Cardiac septum (tissue), 1 donor: ENCODE measurements at regions of chr1 and their contacts with region 1.

Region 1: DNA sequence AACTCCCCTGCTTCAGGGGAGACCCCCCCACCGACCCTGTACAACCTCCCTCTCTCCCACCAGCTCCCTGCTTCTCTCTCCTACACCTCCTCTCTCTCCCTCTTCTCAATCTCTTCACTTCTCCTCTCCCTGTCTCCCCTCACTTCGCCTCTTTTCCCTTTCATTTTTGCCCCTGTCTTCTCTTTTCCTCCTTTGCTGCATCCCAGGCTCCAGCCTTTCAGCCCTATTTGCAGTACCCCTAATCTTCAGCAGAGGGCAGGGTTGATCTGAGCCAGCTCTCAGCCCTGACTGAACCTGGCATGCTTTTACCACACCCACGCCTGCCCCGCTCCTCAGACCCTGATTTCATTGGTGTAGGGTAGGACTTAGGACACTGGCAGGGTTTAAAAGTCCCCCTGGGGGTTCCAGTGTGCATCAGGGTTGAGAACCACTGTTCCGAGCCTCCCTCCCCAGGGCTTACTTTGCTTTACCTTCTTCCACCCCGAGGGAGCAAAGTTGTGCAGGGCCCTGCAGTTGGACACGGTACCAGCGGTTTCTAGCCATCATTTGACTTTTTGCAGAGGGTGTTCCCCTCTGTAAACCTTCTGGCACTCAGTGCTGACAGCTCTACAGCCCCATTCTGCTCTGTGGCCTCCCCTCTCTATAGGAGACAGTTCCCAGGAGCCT is 67.3 kb upstream of the CNTN2 start:
- DNase-seq: no peak

Region 2: GRCh38 chr1:205061665-205062069 is 86.0 kb after region 1 on chr1:
- intact Hi-C with region 1: loop called (anchors 2 kb)
- DNase-seq: peak; percentile 88

Region 3: DNA sequence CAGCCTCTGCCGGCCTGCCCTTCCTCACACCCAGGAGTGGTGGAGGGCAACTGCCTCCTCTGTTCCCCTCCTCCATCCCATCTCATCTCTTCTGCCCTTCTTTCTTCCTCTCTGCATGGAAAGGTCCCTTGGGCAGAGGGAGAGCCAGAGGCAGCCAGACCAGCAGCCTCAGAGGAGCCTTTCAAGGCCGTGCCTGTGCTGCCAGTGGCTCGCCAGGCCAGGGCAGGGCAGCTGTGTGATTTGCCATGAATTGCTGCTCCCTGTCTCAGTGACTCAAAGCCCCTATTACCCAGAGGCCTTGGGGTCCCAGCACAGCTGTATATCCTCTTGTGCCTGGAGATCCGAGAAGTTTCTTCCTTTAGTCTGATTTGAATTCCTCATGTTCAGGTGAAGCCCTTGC is 273.9 kb after region 1 on chr1:
- intact Hi-C with region 1: loop called (anchors 5 kb)
- DNase-seq: no peak